Activated naive CD4-positive, alpha-beta T cell treated with anti-CD3 and anti-CD28 coated beads for 36 hours (primary cell): ENCODE measurements at regions of chr13 and their contacts with region 1.

Region 1: DNA sequence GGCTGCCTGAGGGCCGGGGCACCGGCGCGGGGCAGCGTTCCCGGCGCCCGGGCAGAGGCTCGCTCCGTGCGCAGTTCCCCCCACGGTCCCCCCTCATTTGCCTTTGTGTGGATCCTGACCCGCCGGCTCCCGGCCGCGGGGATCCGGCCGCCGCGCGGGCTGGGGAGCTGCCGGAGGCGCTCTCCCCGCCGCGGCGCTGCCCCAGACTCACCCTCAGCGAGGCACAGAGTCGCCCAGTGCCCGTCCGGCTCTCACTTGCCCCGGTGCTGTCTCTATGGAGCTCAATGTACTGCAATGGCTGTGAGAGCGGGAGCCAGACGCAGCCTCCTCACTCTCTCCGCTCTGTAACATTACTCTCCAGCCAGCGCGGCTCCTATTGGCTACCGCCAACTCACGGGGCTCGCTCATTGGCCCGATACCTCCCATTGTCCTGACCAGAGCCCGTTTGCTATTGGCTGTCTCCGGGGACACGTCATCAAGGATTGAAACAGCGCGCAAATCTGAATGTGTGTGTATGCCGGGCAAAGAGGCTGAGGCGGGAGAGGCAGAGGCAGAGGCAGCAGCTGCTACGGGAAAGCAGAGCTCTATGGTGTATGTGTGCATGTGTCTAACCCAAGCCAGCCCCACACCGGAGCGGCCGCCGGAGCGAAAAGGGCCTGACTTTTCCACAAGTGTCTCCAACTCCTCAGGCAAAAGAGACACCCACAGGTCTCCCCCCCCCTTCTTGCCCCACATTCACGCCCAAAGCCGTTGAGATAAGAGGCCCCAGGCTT is at the start of gene HMGB1:
- DNase-seq: peak; percentile 99
- H3K4me3 Mint-ChIP-seq: peak within 1 kb of the TSS; percentile 89
- H3K27ac Mint-ChIP-seq: peak within 1 kb of the TSS; percentile 98
- H3K4me1 Mint-ChIP-seq: peaks cover 15% of the 10 kb centered on the region
- H3K27me3 Mint-ChIP-seq: peaks cover 3% of the 10 kb centered on the region
- total RNA-seq, gene HMGB1: 686 to 722 TPM

Region 2: GRCh38 chr13:29595380-29596063 is 870.2 kb before region 1 on chr13 and contains the start of gene SLC7A1:
- CTCF ChIA-PET with region 1: no interaction called
- intact Hi-C with region 1: loop called (anchors 10 kb)
- DNase-seq: peak; percentile 84
- H3K4me3 Mint-ChIP-seq: peak within 1 kb of the TSS; percentile 90
- H3K27ac Mint-ChIP-seq: peak within 1 kb of the TSS; percentile 95
- H3K4me1 Mint-ChIP-seq: peaks cover 39% of the 10 kb centered on the region
- H3K27me3 Mint-ChIP-seq: no peaks in the 10 kb centered on the region
- total RNA-seq, gene SLC7A1: 115 to 119 TPM

Region 3: DNA sequence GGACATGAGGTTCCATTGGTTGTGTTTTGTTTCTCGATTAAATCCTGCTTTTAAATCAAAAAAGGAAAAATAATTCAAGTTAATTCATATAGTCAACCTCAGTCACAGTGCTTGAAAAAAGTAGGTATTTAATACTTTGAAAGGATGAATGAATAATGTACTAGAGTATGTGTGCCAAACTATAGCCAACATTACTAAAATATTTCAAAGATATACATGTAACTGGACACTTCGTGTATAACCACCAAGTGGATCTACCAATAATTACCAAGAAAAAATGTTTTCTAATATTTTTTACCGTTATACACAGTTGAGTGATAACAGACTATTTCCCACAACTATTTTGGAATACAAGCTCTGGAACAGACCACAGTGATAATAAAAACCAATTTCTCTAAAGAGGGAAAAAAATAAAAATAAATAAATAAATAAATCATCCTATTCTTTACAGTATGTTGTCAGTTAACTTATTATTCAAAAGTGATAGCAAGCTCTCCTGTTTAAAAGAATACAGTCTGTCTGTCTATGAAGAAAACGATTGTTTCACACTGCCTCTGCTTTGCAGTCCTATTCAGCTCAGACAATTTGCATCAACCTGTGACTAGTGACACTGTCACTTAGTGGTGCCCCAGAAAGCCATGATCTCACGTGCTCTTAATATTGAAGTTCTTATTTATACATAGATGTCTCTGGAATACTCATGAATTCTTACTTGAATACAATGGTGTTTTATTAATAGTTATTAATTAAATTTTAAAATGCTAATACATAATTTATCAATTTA is 673.6 kb before region 1 on chr13:
- CTCF ChIA-PET with region 1: no interaction called
- intact Hi-C with region 1: no loop called
- DNase-seq: no peak
- H3K4me3 Mint-ChIP-seq: no peak overlapping the region
- H3K27ac Mint-ChIP-seq: no peak overlapping the region
- H3K4me1 Mint-ChIP-seq: peaks cover 44% of the 10 kb centered on the region
- H3K27me3 Mint-ChIP-seq: no peaks in the 10 kb centered on the region

Region 4: DNA sequence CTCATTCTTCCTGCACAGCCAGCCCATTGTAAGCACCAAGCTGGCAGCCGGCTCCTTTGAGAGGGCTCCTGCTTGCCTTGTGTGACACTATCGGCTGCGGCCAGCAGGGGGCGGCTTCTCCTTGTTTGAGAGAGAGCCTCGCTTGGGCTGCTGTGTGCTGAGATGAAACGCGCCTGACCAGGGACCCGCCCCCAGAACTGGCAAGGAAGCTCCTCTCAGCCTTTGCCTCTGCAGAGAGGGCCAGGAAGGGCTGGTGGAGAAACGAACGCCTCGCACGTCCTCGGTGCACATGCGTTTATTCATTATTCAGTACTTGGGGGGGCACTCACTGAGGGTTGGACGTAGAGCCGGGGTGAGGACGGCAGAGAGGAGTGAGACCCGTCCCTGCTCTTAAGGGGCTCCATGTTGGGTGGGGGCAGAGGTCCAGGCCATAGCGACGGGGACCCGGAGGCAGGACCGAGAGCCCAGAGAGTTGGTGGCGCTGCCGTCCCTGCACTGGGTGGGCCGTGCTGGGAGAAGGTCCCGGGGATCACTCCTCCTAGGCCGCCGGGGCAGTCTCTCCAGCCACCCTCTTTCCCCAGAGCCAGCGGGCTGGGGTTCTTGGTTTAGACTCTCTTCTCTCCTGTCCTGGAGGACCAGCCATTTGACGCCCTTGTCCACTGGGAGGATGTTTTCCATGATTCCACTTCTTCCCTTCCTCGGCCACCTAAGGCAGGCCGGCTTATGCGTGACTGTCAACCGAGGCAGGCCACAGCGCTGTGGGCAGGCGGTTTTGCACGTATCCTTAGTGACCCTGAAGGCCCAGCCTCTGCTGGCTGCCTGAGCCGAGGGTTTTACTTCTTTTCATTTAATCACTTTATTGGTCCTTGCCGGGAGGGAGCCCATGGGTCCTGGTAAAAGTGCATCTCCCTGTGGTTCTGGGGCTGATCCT is 332.9 kb before region 1 on chr13:
- CTCF ChIA-PET with region 1: no interaction called
- intact Hi-C with region 1: loop called (anchors 1 kb)
- DNase-seq: peak; percentile 99
- H3K4me3 Mint-ChIP-seq: no peak overlapping the region
- H3K27ac Mint-ChIP-seq: no peak overlapping the region
- H3K4me1 Mint-ChIP-seq: peaks cover 7% of the 10 kb centered on the region
- H3K27me3 Mint-ChIP-seq: no peaks in the 10 kb centered on the region

Region 5: DNA sequence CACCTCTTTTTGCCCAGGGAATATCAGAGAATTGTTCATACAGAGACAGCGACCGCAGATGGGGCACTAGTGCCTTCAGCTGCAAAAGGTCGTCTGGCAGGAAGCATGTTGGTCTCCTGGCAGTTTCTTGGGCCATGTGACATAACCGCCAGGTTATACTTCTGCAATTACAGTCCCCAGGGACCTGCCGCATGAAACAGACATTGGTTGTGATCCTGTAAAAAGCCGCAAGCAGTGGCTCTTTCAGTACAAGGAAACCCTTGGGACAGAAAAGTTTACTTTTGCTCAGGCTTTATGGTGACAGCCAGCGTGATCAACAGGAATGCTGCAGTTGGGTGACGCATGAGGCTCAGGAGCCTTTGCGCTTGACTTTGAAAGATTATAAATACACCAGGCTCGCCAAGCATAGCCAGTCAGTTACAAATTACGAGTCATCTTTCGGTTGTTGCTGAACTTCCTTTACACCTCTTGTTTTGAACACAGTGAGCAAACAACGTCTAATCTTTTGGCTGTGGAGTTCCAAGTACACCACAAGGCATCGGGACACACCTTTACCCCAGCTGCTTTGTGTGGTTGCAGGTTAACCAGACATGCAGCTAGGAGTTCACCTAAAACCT is 94.0 kb before region 1 on chr13:
- CTCF ChIA-PET with region 1: no interaction called
- intact Hi-C with region 1: loop called (anchors 1 kb)
- DNase-seq: peak; percentile 87
- H3K4me3 Mint-ChIP-seq: peak overlapping the region; percentile 58
- H3K27ac Mint-ChIP-seq: peak overlapping the region; percentile 87
- H3K4me1 Mint-ChIP-seq: peaks cover 75% of the 10 kb centered on the region
- H3K27me3 Mint-ChIP-seq: no peaks in the 10 kb centered on the region

Region 6: GRCh38 chr13:30422054-30422839 is 43.5 kb before region 1 on chr13 and contains the start of gene UBE2L5:
- CTCF ChIA-PET with region 1: no interaction called
- intact Hi-C with region 1: loop called (anchors 1 kb)
- DNase-seq: peak; percentile 72
- H3K4me3 Mint-ChIP-seq: peak within 1 kb of the TSS; percentile 80
- H3K27ac Mint-ChIP-seq: peak within 1 kb of the TSS; percentile 57
- H3K4me1 Mint-ChIP-seq: peaks cover 10% of the 10 kb centered on the region
- H3K27me3 Mint-ChIP-seq: no peaks in the 10 kb centered on the region
- total RNA-seq, gene UBE2L5: not detected

Region 7: DNA sequence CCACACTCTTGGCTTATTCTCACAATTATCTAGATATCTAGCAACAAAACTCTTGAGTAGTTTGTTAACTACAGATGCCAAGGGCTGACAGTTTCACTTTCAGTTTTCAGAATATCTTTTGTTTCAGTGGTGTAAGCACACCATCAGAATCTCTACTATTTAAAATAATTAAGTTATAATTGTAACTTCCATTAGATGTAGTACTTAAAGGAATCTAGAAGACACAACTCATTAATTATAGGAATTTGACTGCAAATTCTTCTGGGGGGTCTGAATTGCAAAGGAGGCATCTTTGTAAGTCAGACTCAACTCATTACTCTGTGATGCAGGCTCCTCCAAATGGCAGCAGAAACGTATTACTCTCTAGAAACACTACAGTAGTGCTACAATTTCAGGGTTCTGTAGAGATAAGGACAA is 107.1 kb after region 1 on chr13:
- CTCF ChIA-PET with region 1: interaction called, 3 read pairs
- intact Hi-C with region 1: loop called (anchors 1 kb)
- DNase-seq: peak; percentile 29
- H3K4me3 Mint-ChIP-seq: peak overlapping the region; percentile 41
- H3K27ac Mint-ChIP-seq: peak overlapping the region; percentile 12
- H3K4me1 Mint-ChIP-seq: peaks cover 33% of the 10 kb centered on the region
- H3K27me3 Mint-ChIP-seq: no peaks in the 10 kb centered on the region

Region 8: GRCh38 chr13:30659980-30660379 is 194.2 kb after region 1 on chr13:
- CTCF ChIA-PET with region 1: no interaction called
- intact Hi-C with region 1: no loop called
- DNase-seq: no peak
- H3K4me3 Mint-ChIP-seq: no peak overlapping the region
- H3K27ac Mint-ChIP-seq: no peak overlapping the region
- H3K4me1 Mint-ChIP-seq: peaks cover 2% of the 10 kb centered on the region
- H3K27me3 Mint-ChIP-seq: no peaks in the 10 kb centered on the region

Region 9: GRCh38 chr13:31044377-31045285 is 578.9 kb after region 1 on chr13:
- CTCF ChIA-PET with region 1: no interaction called
- intact Hi-C with region 1: loop called (anchors 2 kb)
- DNase-seq: peak; percentile 93
- H3K4me3 Mint-ChIP-seq: no peak overlapping the region
- H3K27ac Mint-ChIP-seq: peak overlapping the region; percentile 78
- H3K4me1 Mint-ChIP-seq: peaks cover 43% of the 10 kb centered on the region
- H3K27me3 Mint-ChIP-seq: peaks cover 2% of the 10 kb centered on the region

Region 10: GRCh38 chr13:31394491-31394890 is 928.7 kb after region 1 on chr13:
- CTCF ChIA-PET with region 1: no interaction called
- intact Hi-C with region 1: no loop called
- DNase-seq: no peak
- H3K4me3 Mint-ChIP-seq: no peak overlapping the region
- H3K27ac Mint-ChIP-seq: no peak overlapping the region
- H3K4me1 Mint-ChIP-seq: no peaks in the 10 kb centered on the region
- H3K27me3 Mint-ChIP-seq: peaks cover 2% of the 10 kb centered on the region